Activated CD4-positive, alpha-beta T cell treated with anti-CD3 and anti-CD28 coated beads for 36 hours (primary cell): ENCODE measurements at regions of chr19 and their contacts with region 1.

Region 1: DNA sequence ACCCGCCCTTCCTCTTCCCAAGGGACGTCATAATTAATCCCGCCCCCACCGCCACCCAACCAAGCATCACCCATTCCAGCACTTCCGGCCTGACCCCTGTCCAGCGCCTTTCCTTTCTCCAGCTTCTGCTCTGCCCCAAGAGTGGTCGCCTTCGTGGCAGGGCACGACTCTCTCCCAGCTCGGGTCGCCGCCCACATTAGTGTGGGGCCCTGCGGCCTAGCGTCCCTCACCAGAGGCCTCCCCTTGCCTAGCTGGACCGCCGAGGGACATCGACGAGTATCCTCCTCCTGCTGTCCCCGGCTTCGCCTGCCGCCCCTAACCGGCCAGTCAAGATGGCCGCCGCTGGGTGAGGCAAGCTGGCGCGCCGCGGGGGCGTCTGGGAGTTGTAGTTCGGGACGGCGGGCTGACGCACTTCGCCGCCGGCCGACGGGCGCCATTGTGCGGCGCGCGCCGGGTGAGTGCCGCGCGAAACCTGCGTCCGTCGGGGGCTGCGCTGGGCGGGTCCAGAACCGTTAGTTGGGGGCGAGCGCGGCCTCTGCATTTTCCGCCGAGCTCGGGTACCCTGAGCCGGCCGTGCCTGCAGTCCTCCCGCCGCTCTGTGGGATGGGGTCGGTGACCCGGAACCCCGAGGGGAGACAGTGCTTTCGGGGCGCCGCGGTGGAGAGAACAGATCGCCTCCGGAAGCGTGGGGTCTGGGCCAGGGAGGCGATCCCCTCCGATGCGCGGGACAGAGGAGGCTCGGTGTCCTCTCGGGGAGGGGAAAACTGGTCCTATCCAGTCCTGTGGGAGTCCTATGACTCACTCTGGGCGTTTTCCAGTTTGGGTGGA is at the start of gene ZNF274:
- DNase-seq: peak; percentile 98
- ATAC-seq: peak; percentile 91
- H3K4me3 Mint-ChIP-seq: peak within 1 kb of the TSS; percentile 88
- H3K27ac Mint-ChIP-seq: peak within 1 kb of the TSS; percentile 99
- H3K4me1 Mint-ChIP-seq: peaks cover 16% of the 10 kb centered on the region
- H3K27me3 Mint-ChIP-seq: no peaks in the 10 kb centered on the region
- total RNA-seq, gene ZNF274: 20.2 to 20.5 TPM

Region 2: DNA sequence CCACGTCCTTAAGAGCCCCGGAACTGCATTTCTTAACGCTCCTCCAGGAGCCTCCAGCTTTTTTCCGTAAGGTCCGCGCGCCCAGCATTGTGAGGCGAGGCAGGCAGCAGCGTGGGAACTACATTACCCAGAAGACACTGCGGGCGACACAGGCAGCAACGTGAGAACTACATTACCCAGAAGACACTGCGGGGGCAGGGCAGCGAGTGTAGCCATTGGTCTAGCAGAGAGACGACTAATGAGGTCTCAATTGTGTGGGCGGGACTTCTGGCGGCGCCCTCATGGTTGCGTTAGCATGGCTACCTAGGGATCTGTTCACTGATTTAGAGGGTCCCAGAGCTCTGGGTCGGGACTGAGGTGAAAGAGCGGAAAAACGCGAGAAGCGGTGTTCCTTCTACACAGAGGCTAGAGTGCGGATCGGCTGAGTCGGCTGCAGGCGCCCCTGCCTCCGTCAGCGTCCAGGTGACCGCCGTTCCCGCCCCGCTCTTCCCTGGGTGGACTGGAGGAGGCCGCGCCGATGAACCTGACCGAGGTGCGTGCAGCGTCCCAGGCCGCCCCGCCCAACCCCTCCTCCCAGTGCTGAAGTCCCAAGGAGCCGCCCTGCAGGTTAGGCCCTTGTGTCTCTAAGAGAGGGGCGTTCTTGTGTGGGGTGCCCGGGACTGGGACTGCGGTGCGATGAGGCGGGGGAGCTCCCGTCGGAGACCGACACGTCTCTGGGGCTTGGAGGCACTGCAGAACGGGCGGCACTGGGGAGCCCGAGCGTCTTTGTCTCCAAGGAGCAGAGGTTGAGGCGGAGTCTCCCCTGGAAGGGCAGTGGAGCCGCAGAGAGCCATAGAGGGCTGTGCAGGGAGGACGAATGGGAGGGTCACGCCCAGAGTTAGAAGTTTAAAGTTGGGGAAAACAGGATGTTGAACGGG is 747.9 kb before region 1 on chr19 and contains the start of gene ZNF749:
- CTCF ChIA-PET with region 1: no interaction called
- POLR2A ChIA-PET with region 1: no interaction called
- intact Hi-C with region 1: loop called in 1 of 2 experiments (anchors 1 kb)
- DNase-seq: peak; percentile 97
- ATAC-seq: peak; percentile 98
- H3K4me3 Mint-ChIP-seq: peak within 1 kb of the TSS; percentile 92
- H3K27ac Mint-ChIP-seq: peak within 1 kb of the TSS; percentile 89
- H3K4me1 Mint-ChIP-seq: peaks cover 21% of the 10 kb centered on the region
- H3K27me3 Mint-ChIP-seq: no peaks in the 10 kb centered on the region
- total RNA-seq, gene ZNF749: 10.6 to 17.9 TPM

Region 3: DNA sequence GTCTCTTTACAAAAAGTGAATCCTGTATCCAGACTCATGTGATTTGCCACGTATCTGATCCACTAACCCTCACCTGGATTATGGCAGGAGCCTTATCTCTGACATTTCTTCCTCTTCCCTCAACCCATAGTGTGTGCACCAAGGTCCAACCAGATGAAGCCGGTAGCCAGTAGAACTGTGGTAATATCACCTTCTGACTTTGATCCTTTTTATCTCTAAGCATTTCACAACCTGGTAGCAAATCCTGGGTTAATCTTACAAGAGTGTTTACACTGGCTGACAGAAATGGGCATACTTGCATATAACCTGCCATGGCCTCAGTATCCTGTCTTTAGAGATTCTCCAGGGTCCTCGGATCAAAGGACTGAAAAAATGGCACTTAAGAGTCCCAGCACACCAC is 268.7 kb before region 1 on chr19:
- CTCF ChIA-PET with region 1: no interaction called
- POLR2A ChIA-PET with region 1: no interaction called
- intact Hi-C with region 1: loop called in 1 of 2 experiments (anchors 1 kb)
- DNase-seq: no peak
- ATAC-seq: no peak
- H3K4me3 Mint-ChIP-seq: no peak overlapping the region
- H3K27ac Mint-ChIP-seq: no peak overlapping the region
- H3K4me1 Mint-ChIP-seq: peaks cover 27% of the 10 kb centered on the region
- H3K27me3 Mint-ChIP-seq: no peaks in the 10 kb centered on the region

Region 4: GRCh38 chr19:58166708-58167280 is 16.4 kb before region 1 on chr19:
- CTCF ChIA-PET with region 1: no interaction called
- POLR2A ChIA-PET with region 1: no interaction called
- intact Hi-C with region 1: no loop called
- DNase-seq: no peak
- ATAC-seq: no peak
- H3K4me3 Mint-ChIP-seq: no peak overlapping the region
- H3K27ac Mint-ChIP-seq: no peak overlapping the region
- H3K4me1 Mint-ChIP-seq: no peaks in the 10 kb centered on the region
- H3K27me3 Mint-ChIP-seq: no peaks in the 10 kb centered on the region

Region 5: DNA sequence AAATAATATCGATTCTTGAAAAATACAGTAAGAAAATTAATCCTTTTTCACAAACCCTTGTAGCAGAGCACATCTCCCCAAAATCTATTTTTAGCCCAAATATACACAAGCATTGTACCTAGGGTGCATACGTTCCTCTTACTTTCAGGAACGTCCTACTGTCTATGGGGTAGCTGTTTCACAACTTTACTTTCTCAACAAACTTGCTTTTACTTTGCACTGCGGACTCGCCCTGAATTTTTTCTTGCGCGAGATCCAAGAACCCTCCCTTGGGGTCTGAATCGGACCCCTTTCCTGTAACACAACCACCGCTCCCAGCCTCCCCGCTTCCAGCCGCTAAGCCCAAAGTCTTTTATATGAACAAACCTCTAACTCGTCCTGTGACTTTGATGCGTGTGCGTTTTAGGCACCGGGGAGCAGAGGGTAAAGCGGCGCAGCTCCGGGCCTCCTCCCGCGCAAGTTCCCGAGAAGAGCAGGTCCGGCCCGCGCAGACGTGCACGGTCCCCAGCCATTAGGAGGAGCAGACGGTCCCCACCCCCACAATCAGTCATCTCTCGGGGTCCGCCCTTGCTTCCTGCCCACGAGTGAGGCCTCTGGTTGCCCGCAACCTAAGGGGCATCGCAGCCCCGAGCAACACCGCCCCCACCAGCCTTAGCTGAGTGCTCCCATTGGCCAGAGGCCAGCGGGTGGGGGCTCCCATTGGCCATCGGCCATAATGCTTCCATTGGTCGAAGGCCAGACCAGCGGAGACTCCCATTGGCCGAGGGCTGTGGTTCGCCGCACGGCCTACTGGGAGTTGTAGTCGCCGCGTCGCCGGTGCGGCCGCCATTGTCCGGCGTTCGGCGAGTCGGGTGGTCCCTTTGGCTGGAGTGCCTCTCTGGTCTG is 95.2 kb after region 1 on chr19 and contains the start of gene ZNF8:
- CTCF ChIA-PET with region 1: no interaction called
- POLR2A ChIA-PET with region 1: interaction called, 3 read pairs
- intact Hi-C with region 1: loop called in 1 of 2 experiments (anchors 1 kb)
- DNase-seq: peak; percentile 99
- ATAC-seq: peak; percentile 98
- H3K4me3 Mint-ChIP-seq: peak within 1 kb of the TSS; percentile 98
- H3K27ac Mint-ChIP-seq: peak within 1 kb of the TSS; percentile 95
- H3K4me1 Mint-ChIP-seq: peaks cover 28% of the 10 kb centered on the region
- H3K27me3 Mint-ChIP-seq: no peaks in the 10 kb centered on the region
- total RNA-seq, gene ZNF8: 4.4 to 4.5 TPM

Region 6: DNA sequence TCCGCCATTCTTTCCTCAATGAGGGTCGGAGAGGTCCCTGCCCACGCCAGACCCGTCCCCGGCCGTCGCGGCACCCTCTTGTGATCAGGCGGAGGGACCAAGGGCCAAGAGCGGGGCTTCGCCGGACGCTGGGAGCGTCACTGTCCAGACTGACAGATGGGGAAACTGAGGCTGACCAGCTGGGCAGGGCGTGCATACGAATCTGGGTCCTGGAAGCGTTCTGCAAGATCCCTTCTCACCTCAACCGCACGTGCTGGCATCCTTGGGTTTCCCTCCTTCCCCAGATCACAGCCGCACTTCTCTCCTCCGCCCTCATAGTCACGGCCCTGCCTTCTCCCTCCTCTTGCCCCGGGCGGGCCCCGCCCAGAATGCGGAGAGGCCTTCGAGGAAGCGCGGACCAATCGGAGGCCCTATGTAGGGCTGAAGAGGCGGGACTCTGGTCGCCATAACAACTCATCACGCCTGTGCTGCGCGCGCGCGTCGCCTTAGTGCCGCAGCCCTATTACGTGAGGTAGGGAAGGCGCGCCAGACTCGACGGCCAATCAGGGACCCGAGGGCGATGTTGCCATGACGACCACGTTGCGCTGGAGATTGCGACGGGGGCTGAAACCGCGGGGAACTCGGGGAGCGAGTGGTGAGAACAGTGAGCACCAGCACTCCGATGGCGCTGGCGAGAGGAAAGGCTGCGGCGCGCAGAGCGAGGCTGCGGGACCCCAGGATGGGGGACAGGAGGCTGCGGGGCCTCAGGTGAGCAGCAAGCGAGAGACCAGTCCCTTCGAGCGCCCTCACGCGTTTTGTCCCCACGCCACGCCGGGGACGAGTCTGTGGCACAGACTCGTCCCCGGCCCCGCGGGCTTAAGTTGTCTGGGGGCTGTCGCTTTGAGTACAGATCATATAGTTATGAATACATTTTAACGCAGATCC is 218.0 kb after region 1 on chr19:
- CTCF ChIA-PET with region 1: no interaction called
- POLR2A ChIA-PET with region 1: no interaction called
- intact Hi-C with region 1: loop called (anchors 1 to 10 kb)
- DNase-seq: peak; percentile 100
- ATAC-seq: peak; percentile 97
- H3K4me3 Mint-ChIP-seq: peak overlapping the region; percentile 82
- H3K27ac Mint-ChIP-seq: peak overlapping the region; percentile 61
- H3K4me1 Mint-ChIP-seq: peaks cover 14% of the 10 kb centered on the region
- H3K27me3 Mint-ChIP-seq: peaks cover 2% of the 10 kb centered on the region

Region 7: DNA sequence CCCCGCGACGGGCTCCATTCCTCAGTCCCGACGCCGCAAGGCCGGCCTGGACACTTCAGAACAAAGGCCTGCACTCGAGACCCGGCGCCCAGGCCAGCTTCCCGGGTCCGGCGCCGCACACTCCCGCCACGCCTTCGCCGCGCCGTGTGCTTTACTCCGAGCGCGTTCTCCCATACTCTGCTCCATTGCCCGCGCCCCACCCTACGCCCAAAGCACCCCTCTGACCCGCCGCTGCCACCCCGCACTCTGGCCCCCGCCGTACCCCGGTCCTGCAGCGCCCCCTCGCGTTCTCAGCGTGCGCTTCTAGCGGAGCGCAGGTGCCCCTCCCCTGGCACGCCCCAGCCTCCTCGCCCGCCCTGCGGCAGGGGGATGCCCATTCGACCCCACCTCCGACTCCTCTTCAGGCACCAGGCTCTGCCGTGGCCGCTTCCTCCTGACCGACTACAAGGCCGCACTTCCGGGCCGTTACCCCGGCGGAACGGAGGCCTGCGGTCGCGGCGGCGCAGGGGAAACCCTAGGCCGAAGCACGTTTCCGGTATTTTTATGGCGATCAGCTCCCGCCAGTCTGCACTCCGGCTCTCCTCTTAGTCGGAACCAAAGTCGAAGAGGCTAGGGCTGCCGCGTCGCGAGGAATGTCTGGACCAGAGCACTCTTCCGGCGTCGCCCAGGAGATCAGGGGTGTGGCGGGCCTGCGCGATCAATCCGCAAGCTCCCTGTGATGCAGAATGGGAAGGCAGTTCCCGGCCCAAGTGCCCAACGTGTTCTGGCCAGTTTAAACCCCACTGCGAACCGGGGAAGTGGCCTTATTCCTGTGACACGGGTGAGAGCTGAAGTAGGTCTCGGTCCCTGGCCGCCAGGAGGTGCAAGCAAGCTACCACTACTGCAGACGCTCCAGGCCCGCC is 336.4 kb after region 1 on chr19 and contains the start of gene ZBTB45:
- CTCF ChIA-PET with region 1: no interaction called
- POLR2A ChIA-PET with region 1: no interaction called
- intact Hi-C with region 1: loop called in 1 of 2 experiments (anchors 1 kb)
- DNase-seq: peak; percentile 96
- ATAC-seq: peak; percentile 82
- H3K4me3 Mint-ChIP-seq: peak within 1 kb of the TSS; percentile 82
- H3K27ac Mint-ChIP-seq: peak within 1 kb of the TSS; percentile 94
- H3K4me1 Mint-ChIP-seq: peaks cover 39% of the 10 kb centered on the region
- H3K27me3 Mint-ChIP-seq: no peaks in the 10 kb centered on the region
- total RNA-seq, gene ZBTB45: 10.1 to 11.1 TPM